Activated naive CD4-positive, alpha-beta T cell treated with anti-CD3 and anti-CD28 coated beads for 36 hours (primary cell): ENCODE measurements at regions of chr6 and their contacts with region 1.

Region 1: GRCh38 chr6:160520043-160520904 is 143.8 kb downstream of the LPA start:
- DNase-seq: peak; percentile 45
- H3K4me3 Mint-ChIP-seq: peak overlapping the region; percentile 88
- H3K27ac Mint-ChIP-seq: peak overlapping the region; percentile 80
- H3K4me1 Mint-ChIP-seq: peaks cover 17% of the 10 kb centered on the region
- H3K27me3 Mint-ChIP-seq: no peaks in the 10 kb centered on the region

Region 2: GRCh38 chr6:159665868-159666635 is 854.2 kb before region 1 on chr6:
- CTCF ChIA-PET with region 1: no interaction called
- intact Hi-C with region 1: no loop called
- DNase-seq: no peak
- H3K4me3 Mint-ChIP-seq: no peak overlapping the region
- H3K27ac Mint-ChIP-seq: no peak overlapping the region
- H3K4me1 Mint-ChIP-seq: peaks cover 2% of the 10 kb centered on the region
- H3K27me3 Mint-ChIP-seq: no peaks in the 10 kb centered on the region

Region 3: GRCh38 chr6:160505970-160506369 is 14.3 kb before region 1 on chr6:
- CTCF ChIA-PET with region 1: interaction called, 14 read pairs
- intact Hi-C with region 1: no loop called
- DNase-seq: no peak
- H3K4me3 Mint-ChIP-seq: no peak overlapping the region
- H3K27ac Mint-ChIP-seq: no peak overlapping the region
- H3K4me1 Mint-ChIP-seq: no peaks in the 10 kb centered on the region
- H3K27me3 Mint-ChIP-seq: no peaks in the 10 kb centered on the region

Region 4: GRCh38 chr6:160534050-160534696 is 13.9 kb after region 1 on chr6:
- CTCF ChIA-PET with region 1: interaction called, 109 read pairs
- intact Hi-C with region 1: loop called (anchors 1 kb)
- DNase-seq: peak; percentile 69
- H3K4me3 Mint-ChIP-seq: no peak overlapping the region
- H3K27ac Mint-ChIP-seq: no peak overlapping the region
- H3K4me1 Mint-ChIP-seq: no peaks in the 10 kb centered on the region
- H3K27me3 Mint-ChIP-seq: no peaks in the 10 kb centered on the region

Region 5: GRCh38 chr6:160667639-160668481 is 147.6 kb after region 1 on chr6:
- CTCF ChIA-PET with region 1: interaction called, 6 read pairs
- intact Hi-C with region 1: loop called (anchors 1 kb)
- DNase-seq: peak; percentile 70
- H3K4me3 Mint-ChIP-seq: no peak overlapping the region
- H3K27ac Mint-ChIP-seq: no peak overlapping the region
- H3K4me1 Mint-ChIP-seq: no peaks in the 10 kb centered on the region
- H3K27me3 Mint-ChIP-seq: peaks cover 2% of the 10 kb centered on the region

Region 6: DNA sequence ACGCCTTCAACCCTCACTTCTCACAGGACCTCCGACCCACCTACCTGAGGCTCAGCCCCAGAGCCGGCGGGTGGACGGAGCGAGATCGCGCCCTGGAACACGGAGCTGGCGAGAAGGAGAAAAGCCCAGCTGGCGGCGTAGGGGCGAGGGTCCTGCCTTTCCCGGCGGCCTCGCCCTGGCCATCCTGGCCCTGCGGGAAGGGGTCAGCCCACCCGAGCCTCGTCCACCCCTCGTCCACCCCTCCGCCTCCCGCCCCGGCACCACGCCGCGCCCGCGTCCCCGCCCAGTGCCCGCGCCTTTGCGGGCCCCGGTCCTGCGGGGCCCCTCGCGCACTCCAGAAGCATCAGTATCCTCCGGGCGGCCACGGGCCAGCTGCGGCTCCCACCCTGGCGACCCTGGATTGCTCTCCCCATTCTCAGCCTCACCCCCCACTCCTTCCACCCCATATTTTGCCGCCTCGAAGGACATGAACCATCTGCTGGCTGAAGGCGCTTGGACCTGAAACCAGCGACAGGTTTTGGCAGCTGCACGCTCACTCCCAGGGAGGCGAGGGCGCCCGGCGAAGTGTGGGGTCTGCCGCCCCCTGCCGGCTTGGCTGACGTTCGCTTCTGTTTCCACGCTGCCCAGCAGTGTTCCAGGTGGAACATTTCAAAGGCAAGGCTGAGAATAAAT is 246.9 kb after region 1 on chr6:
- CTCF ChIA-PET with region 1: no interaction called
- intact Hi-C with region 1: loop called (anchors 5 kb)
- DNase-seq: peak; percentile 56
- H3K4me3 Mint-ChIP-seq: peak overlapping the region; percentile 61
- H3K27ac Mint-ChIP-seq: no peak overlapping the region
- H3K4me1 Mint-ChIP-seq: peaks cover 5% of the 10 kb centered on the region
- H3K27me3 Mint-ChIP-seq: peaks cover 43% of the 10 kb centered on the region

Region 7: GRCh38 chr6:160992061-160992979 is 472.0 kb after region 1 on chr6:
- CTCF ChIA-PET with region 1: no interaction called
- intact Hi-C with region 1: loop called (anchors 5 kb)
- DNase-seq: peak; percentile 51
- H3K4me3 Mint-ChIP-seq: peak overlapping the region; percentile 87
- H3K27ac Mint-ChIP-seq: peak overlapping the region; percentile 77
- H3K4me1 Mint-ChIP-seq: peaks cover 31% of the 10 kb centered on the region
- H3K27me3 Mint-ChIP-seq: peaks cover 2% of the 10 kb centered on the region